Cardiac septum (tissue), 1 donor: ENCODE measurements at regions of chr18 and their contacts with region 1.

Region 1: GRCh38 chr18:47772374-47773248 is 157.8 kb downstream of the SMAD2 start:
- DNase-seq: no peak

Region 2: DNA sequence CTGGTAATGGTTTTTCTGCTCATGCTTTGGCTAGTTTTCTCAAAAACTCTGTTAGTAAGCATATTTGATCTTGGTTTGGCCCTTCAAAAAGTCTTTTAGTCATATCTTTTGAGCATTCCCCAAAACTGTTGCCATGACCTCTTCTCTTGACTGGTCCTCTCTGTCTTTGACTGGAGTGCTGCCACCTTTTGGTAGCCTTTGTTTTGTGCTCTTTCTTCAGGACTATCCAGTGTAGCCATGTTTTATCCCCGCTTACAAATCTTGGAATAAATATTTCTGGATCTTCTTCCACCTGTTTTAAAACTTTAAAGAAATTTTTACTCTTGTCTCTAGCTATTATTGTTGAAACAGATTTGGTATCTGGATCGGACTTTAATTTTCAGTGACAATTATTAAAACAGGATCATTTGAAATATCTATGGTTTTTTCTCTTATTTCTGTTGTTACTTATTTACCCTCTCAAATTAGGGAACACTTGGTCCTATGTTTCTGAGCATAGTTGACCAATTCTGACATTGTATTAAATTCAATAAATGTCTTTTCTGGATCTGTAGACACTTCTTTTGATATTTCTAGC is 736.2 kb before region 1 on chr18:
- intact Hi-C with region 1: no loop called
- DNase-seq: no peak

Region 3: GRCh38 chr18:47930931-47931717 is 158.5 kb after region 1 on chr18:
- intact Hi-C with region 1: loop called (anchors 5 kb)
- DNase-seq: peak; percentile 99

Region 4: DNA sequence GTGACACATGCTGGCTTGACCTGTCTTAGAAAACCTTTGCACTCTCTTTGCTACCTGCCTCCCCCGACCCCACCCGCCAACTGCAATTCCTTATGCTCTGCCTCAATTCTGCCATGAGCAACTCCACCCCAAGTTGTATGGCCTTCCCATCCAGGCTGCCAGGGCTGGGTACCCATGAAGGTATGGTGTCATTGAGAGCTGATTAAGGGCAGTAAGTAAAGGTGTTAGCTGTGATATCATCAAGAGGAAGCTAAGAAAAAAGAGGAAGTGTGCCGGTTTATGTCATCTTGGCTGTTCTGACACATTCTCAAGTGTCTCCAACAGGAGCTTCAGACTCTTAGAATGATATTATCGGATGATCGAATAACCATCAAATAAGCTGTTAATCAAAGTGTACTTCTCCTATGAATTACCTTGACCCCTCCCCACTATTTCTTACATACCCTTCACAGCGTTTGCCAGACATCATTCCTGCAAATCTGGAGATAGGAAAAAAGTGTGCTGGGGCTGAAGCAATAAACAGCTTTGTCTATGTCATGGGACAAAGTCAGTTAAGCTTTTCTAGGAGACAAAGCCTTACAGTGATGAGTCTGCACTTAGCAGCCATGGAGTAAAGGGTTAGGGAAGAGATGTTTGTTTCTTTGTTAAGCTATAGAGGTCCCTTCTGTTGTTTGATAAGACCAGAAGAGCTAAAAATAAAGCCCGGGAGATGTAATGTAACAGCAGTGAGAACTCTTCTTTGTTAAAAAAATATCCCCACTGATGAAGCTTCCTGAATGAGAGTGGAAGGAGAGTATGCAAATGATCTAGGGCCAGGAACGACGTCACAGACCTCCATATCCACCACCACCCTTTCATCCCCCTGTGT is 198.3 kb after region 1 on chr18:
- intact Hi-C with region 1: no loop called
- DNase-seq: no peak

Region 5: GRCh38 chr18:48007955-48008701 is 235.5 kb after region 1 on chr18:
- intact Hi-C with region 1: loop called (anchors 5 kb)
- DNase-seq: no peak

Region 6: GRCh38 chr18:48022531-48023329 is 250.1 kb after region 1 on chr18:
- intact Hi-C with region 1: loop called (anchors 1 kb)
- DNase-seq: no peak